ENCODE measurements at regions of chr12 and their contacts with region 1.

Region 1: GRCh38 chr12:123043536-123044001 is 63.1 kb downstream of the ARL6IP4 start:
- DNase-seq: peak; percentile 77 to 83
- ATAC-seq: peak; percentile 93 to 94
- H3K4me3 ChIP-seq: no peak overlapping the region
- H3K27ac ChIP-seq: peak overlapping the region; percentile 41 to 79
- H3K4me1 ChIP-seq: peaks cover 24% of the 10 kb centered on the region
- CTCF ChIP-seq: peak; percentile 75
- EP300 ChIP-seq: no peak; a peak in 1 of 5 replicates
- POLR2A ChIP-seq: no peak
- RAD21 ChIP-seq: peak; percentile 97 to 98

Region 2: GRCh38 chr12:122740351-122740750 is 303.2 kb before region 1 on chr12:
- CTCF ChIA-PET with region 1: no interaction called
- POLR2A ChIA-PET with region 1: no interaction called
- DNase-seq: peak in 1 of 2 experiments; percentile 45
- ATAC-seq: no peak
- H3K4me3 ChIP-seq: no peak overlapping the region
- H3K27ac ChIP-seq: no peak overlapping the region
- H3K4me1 ChIP-seq: no peaks in the 10 kb centered on the region
- CTCF ChIP-seq: no peak
- EP300 ChIP-seq: no peak
- POLR2A ChIP-seq: no peak
- RAD21 ChIP-seq: no peak

Region 3: DNA sequence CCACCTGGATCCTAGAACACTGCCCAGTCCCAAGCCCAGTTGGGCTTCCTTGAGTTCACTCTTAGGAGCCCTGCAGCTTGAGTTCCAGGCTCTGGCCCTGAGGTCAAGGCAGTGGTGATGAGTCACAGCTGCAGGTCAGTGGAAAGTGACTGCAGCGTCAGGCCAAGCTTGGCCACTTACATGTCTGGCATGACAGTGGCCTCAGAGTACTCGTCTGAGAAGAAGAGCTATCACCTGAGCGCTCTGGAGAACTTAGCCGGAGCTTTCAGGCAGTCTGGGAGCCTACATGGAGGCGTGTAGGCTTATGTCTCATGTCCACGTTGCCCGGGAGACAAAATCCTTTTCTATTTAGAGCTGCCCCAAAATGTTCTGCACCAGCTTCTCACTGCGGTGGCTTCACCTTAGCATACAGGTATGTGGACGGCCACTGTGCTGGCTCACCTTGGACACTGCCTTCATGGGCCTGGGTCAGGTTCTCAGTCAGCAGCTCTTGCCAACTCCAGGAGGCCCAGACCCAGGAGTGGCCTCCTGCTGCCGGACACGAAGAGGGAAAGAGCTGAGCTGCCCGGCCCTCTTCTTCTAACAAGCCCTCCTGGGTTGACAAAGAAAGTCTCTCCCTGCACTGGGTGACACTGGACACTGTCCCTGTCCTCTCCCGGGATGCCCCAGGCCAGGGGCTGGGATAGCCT is 12.6 kb after region 1 on chr12:
- CTCF ChIA-PET with region 1: interaction called, 38 read pairs
- POLR2A ChIA-PET with region 1: no interaction called
- DNase-seq: peak in 1 of 2 experiments; percentile 24
- ATAC-seq: peak; percentile 48 to 51; a peak in 3 of 6 replicates
- H3K4me3 ChIP-seq: no peak overlapping the region
- H3K27ac ChIP-seq: peak overlapping the region in 1 of 2 experiments; percentile 43; a peak in 1 of 6 replicates
- H3K4me1 ChIP-seq: peaks cover 14% of the 10 kb centered on the region
- CTCF ChIP-seq: no peak
- EP300 ChIP-seq: no peak
- POLR2A ChIP-seq: no peak
- RAD21 ChIP-seq: no peak

Region 4: DNA sequence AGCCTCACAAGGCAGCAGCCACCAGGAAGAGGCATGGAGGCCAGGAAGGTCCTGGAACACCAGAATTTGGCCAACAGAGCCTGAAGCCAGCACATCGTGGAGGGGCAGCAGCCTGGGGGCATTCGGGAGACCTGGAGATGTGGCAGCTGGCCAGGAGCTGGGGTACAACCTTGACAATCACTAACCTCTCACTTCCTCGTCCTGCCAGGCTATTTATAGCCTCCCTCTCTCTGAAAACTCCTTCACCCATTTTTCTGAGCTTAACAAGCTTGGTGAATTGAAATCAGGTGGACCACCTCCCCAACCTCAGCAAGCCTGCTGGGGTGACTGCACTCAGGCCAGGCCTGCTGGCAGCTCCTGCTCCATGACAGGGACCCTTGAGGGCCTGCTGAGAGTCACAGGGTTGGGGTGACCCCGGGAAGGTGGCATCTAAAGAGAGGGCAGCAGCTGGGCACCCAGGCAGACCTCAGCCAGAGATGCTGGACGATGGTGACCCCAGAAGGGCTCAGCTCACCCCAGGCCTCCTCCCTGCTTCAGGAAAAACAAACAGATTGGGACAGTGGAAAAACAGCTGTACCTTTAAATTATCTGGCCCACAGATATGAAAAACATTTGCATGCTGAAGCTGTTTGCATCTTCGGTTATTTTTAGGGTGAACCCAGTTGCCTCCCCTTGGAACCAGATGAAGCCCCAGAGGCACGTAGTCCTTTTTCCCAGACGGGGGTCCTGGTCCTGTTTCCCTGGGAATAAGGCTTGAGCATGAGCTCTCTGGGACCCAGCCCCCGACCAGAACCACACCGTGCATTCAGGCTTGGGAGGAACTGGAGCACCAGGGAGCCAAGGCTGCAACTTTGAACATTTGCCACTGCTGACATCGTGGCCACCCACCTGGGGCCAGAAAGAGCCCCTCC is 40.3 kb after region 1 on chr12:
- CTCF ChIA-PET with region 1: interaction called, 11 read pairs
- POLR2A ChIA-PET with region 1: no interaction called
- DNase-seq: no peak
- ATAC-seq: no peak
- H3K4me3 ChIP-seq: no peak overlapping the region
- H3K27ac ChIP-seq: peak overlapping the region; percentile 81 to 89
- H3K4me1 ChIP-seq: peaks cover 62% of the 10 kb centered on the region
- CTCF ChIP-seq: no peak
- EP300 ChIP-seq: no peak
- POLR2A ChIP-seq: no peak
- RAD21 ChIP-seq: no peak

Region 5: DNA sequence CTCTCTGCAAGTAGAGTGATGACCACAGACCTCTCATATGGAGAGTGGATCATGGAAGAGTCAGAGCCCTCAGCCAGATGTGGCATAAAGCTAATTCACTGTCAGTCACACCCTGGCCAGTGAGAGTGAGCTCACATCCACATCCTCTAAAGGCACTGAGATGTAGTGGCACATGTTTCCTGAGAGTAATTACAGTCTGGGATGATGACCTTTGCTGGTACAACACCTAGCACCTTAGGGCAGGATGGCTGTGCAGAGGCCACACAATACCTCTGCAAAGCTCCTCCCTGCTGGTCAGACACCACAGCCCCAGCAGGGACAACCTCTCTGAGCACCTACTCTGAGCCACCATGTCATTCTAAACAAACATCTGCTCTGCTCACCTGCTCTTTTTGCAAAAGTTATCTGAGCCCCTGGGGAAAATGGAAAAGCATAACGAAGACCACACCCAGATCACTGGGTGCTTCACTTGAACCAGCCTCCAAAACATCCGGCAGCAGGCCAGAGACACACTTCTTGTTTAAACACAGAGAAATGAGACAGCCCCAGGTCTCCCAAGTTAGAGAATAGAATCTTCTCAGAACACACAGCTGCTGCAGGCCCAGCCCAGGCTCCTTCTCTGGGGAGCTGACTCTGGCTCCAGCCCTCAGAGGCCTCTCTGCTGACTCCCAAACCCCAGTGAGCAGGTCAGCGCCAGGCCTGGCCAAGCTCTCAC is 77.0 kb after region 1 on chr12:
- CTCF ChIA-PET with region 1: interaction called, 13 read pairs
- POLR2A ChIA-PET with region 1: no interaction called
- DNase-seq: no peak
- ATAC-seq: peak; percentile 14 to 24; a peak in 2 of 6 replicates
- H3K4me3 ChIP-seq: no peak overlapping the region
- H3K27ac ChIP-seq: peak overlapping the region; percentile 40 to 77; a peak in 3 of 6 replicates
- H3K4me1 ChIP-seq: peaks cover 40% of the 10 kb centered on the region
- CTCF ChIP-seq: no peak
- EP300 ChIP-seq: no peak
- POLR2A ChIP-seq: no peak
- RAD21 ChIP-seq: no peak

Region 6: DNA sequence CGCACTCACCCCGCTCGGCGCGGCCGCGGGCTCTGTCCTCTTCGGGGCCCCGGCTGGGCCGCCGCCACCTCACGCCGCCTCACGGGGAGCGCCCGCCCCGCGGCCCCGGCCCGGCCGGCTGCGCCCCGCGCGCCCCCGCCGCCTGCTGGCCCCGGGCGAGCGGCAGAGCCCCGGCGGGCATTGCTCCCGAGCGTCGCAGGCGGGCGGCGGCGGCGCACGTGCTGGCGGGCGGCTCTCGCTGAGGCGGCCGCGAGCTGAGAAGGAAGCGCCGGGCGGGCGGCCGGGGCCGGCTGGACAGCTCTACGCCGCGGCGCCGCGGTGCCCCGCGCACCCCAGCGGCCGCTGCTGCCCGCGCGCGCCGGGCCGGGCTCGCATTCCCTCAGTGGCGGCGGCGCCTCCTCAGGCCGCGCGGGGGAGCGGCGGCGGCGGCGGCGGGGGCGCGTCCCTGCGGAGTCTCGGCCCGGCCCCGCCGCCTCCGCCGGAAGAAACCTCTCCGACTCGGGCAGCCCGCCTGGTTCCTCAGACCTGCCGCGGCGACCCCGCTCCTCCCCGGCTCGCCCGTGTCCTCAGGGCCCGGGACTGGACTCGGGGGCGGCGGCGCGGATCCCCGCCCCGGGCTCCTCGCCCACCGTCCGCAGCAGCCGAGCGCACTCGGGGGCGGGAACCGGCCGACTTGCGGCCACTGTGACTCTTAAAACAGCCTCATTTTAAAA is 107.3 kb after region 1 on chr12 and contains the start of gene PITPNM2:
- CTCF ChIA-PET with region 1: interaction called, 104 read pairs
- POLR2A ChIA-PET with region 1: interaction called, 5 read pairs
- DNase-seq: peak; percentile 57
- ATAC-seq: peak; percentile 77 to 86
- H3K4me3 ChIP-seq: peak within 1 kb of the TSS; percentile 80
- H3K27ac ChIP-seq: peak within 1 kb of the TSS; percentile 93 to 99
- H3K4me1 ChIP-seq: peaks cover 34% of the 10 kb centered on the region
- CTCF ChIP-seq: peak; percentile 49; the same call in 2 of the 3 replicates
- EP300 ChIP-seq: no peak
- POLR2A ChIP-seq: peak; percentile 25; the same call in 1 of the 2 replicates
- RAD21 ChIP-seq: 0 out of 5 replicates have a peak, but pooled peaks of 1 of the 2 experiments have one; percentile 23
- polyA plus RNA-seq, gene PITPNM2: 2.6 and 4.3 TPM in 2 replicates

Region 7: GRCh38 chr12:123242116-123242904 is 198.7 kb after region 1 on chr12:
- CTCF ChIA-PET with region 1: interaction called, 71 read pairs
- POLR2A ChIA-PET with region 1: interaction called, 4 read pairs
- DNase-seq: no peak
- ATAC-seq: no peak
- H3K4me3 ChIP-seq: no peak overlapping the region
- H3K27ac ChIP-seq: 0 out of 6 replicates have a peak overlapping the region, but pooled peaks of 1 of the 2 experiments have one; percentile 13
- H3K4me1 ChIP-seq: no peaks in the 10 kb centered on the region
- CTCF ChIP-seq: no peak
- EP300 ChIP-seq: no peak
- POLR2A ChIP-seq: no peak
- RAD21 ChIP-seq: no peak